ENCODE measurements at regions of chr2 and their contacts with region 1.

Region 1: DNA sequence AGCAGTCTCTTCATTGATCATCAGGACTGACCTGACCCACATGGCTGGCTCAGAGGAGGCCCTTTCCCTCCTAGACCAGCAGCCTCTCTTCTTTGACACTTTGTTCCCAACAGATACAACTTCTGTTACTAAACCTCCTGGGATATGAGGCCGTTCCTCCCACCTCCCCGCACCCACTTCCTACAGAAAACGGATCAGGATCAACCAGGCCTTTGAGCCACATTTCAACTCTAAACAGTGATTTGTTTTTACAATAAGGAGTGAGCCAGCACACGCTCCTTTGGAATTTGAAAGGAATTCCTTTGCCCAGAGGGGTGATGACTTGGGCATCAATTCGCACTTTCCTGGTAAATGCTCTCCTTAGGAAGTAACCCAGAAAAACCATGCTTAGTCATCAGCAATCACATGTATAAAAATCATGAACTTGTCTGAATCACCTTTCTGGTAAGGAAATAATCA is 180.4 kb downstream of the FAM124B start:
- DNase-seq: peak; percentile 76 to 99
- H3K4me3 ChIP-seq: no peak overlapping the region
- H3K27ac ChIP-seq: peak overlapping the region; percentile 91
- H3K4me1 ChIP-seq: peaks cover 39% of the 10 kb centered on the region
- H3K27me3 ChIP-seq: no peaks in the 10 kb centered on the region
- CTCF ChIP-seq: no peak

Region 2: GRCh38 chr2:223760838-223761502 is 460.5 kb before region 1 on chr2:
- CTCF ChIA-PET with region 1: no interaction called
- POLR2A ChIA-PET with region 1: no interaction called
- intact Hi-C with region 1: no loop called
- DNase-seq: peak; percentile 91 to 99
- H3K4me3 ChIP-seq: peak overlapping the region; percentile 42; the same call in 1 of the 2 replicates
- H3K27ac ChIP-seq: peak overlapping the region; percentile 96
- H3K4me1 ChIP-seq: peaks cover 42% of the 10 kb centered on the region
- H3K27me3 ChIP-seq: no peaks in the 10 kb centered on the region
- CTCF ChIP-seq: peak; percentile 60

Region 3: DNA sequence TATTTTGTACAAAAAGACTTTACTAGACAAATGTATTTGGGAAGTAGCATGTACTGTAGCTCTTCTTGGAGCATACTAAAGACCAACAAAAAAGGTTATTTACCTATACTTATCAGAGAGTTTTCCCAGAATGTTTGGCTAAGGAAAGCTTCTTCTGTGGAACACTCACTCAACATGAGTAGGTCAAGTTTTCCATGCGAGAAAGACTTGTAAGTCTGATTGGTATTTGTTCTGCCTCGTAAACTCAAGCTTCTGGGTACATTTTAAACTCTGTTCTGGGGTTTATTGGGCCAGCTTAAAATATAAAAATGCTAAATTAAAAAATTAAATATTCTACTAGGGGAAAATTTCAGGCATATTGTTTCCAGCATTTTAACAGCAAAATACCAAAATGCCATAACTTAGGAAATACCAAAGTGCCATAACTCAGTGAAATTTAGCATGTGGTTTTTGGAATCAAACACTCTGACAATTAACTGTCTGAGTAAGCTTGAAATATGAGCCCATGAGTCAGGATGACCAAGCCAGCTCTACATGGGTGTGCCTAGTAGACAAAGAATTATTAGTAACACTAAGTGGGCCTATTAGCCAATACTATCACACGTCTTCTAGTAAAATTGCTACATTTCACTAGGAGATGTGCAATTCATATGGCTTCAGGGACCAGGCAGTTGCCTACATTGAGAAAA is 135.1 kb before region 1 on chr2:
- CTCF ChIA-PET with region 1: no interaction called
- POLR2A ChIA-PET with region 1: interaction called, 4 read pairs
- intact Hi-C with region 1: loop called (anchors 1 kb)
- DNase-seq: peak; percentile 70 to 99
- H3K4me3 ChIP-seq: peak overlapping the region; percentile 0; the same call in 1 of the 2 replicates
- H3K27ac ChIP-seq: peak overlapping the region; percentile 92
- H3K4me1 ChIP-seq: peaks cover 42% of the 10 kb centered on the region
- H3K27me3 ChIP-seq: no peaks in the 10 kb centered on the region
- CTCF ChIP-seq: no peak

Region 4: DNA sequence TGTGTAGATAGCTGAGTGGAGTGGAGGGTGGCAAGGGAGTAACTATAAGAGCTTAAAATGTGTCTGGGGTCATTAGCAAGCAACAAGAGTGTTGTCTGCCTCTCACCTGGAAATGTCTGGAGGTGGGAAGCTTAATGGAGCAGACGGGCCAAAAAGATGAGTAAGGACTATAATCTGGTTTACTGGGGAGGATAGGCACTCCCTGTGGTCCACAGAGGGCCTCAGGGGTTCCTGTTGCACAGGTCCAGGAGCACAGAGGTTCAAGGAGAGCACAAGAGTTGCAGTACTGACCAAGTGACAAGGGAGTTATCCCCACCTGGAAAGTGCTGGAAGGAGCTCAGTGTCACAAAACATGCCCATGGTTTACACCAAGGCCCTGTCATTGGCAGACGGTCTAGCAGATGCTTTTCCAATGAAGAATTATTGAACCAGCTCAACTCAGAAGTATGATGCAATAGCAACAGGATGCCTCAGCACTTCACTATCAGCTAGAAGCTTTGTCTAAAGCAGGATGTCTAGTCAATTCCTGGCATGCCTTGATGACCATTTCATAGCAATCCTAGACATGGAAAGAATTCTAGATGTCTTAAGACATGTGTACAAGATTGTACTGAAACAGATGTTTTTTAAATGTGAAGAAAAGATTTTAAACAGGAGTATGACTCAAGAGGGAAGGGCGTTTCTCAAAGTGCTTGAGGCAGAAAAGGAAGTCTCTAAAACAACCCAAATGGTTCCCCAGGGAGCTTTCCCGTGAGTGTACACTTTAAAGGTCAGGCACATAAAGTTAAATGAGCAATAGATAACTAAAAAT is 119.5 kb before region 1 on chr2:
- CTCF ChIA-PET with region 1: no interaction called
- POLR2A ChIA-PET with region 1: no interaction called
- intact Hi-C with region 1: no loop called
- DNase-seq: peak in 1 of 2 experiments; percentile 79
- H3K4me3 ChIP-seq: no peak overlapping the region
- H3K27ac ChIP-seq: peak overlapping the region; percentile 78
- H3K4me1 ChIP-seq: peaks cover 26% of the 10 kb centered on the region
- H3K27me3 ChIP-seq: no peaks in the 10 kb centered on the region
- CTCF ChIP-seq: no peak

Region 5: DNA sequence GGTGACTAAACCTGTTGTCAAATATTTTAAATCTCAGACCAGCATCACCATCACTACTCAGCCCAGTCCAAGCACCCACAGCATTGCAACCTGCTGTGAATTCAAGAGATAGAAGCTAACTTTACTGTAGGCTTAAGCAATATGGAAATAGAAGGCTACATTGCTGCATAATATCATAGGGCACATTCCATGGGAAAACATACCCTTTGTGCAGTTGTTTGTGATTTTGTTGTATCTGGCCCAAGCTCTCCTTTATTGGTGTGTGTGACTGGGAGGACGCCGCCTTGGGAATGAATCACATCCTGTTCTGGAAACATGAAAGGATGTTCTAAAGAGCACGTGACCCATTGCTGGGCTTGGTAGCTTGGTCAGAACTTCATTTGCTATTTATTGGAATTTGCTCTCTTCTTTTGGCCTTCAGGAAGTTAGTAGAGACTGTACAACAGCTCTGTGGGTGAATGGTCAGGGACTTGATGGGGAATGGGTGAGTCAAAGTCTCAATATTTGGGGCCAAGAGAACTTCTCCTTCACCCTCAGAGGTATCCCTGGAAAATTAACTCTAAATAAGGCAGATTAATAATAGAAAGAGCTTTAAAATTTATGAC is 75.6 kb before region 1 on chr2:
- CTCF ChIA-PET with region 1: no interaction called
- POLR2A ChIA-PET with region 1: no interaction called
- intact Hi-C with region 1: loop called (anchors 2 kb)
- DNase-seq: peak; percentile 36 to 51
- H3K4me3 ChIP-seq: no peak overlapping the region
- H3K27ac ChIP-seq: 0 out of 2 replicates have a peak overlapping the region, but pooled peaks have one; percentile 5
- H3K4me1 ChIP-seq: peaks cover 72% of the 10 kb centered on the region
- H3K27me3 ChIP-seq: no peaks in the 10 kb centered on the region
- CTCF ChIP-seq: no peak

Region 6: GRCh38 chr2:224268441-224268840 is 47.0 kb after region 1 on chr2:
- CTCF ChIA-PET with region 1: no interaction called
- POLR2A ChIA-PET with region 1: interaction called, 4 read pairs
- intact Hi-C with region 1: loop called (anchors 2 kb)
- DNase-seq: peak; percentile 27 to 93
- H3K4me3 ChIP-seq: no peak overlapping the region
- H3K27ac ChIP-seq: peak overlapping the region; percentile 53
- H3K4me1 ChIP-seq: peaks cover 28% of the 10 kb centered on the region
- H3K27me3 ChIP-seq: no peaks in the 10 kb centered on the region
- CTCF ChIP-seq: no peak

Region 7: DNA sequence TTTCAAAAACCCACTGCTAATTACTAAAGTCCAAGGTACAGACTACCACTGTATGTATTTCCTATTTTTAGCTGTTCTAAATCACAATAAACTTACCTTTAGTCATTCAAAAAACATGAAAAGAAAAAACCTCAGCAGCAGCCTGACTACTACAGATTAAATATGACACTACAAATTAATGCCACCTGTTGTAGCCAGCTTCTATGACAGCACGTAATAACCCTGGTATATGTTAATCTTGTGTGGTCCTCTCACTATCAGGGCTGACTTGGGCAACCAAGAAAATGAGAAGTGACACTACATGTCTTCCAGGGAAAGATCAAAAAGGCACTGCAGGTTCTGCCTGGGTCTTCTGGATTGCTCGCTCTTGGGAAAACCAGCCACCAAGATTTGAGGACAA is 271.0 kb after region 1 on chr2:
- CTCF ChIA-PET with region 1: no interaction called
- POLR2A ChIA-PET with region 1: no interaction called
- intact Hi-C with region 1: loop called (anchors 5 kb)
- DNase-seq: no peak
- H3K4me3 ChIP-seq: no peak overlapping the region
- H3K27ac ChIP-seq: no peak overlapping the region
- H3K4me1 ChIP-seq: 0 out of 2 replicates have a peak, but pooled peaks cover 8% of the 10 kb centered on the region
- H3K27me3 ChIP-seq: no peaks in the 10 kb centered on the region
- CTCF ChIP-seq: no peak

Measured in PC-9 (cell line).